ENCODE measurements at regions of chr2 and their contacts with region 1.

Region 1: DNA sequence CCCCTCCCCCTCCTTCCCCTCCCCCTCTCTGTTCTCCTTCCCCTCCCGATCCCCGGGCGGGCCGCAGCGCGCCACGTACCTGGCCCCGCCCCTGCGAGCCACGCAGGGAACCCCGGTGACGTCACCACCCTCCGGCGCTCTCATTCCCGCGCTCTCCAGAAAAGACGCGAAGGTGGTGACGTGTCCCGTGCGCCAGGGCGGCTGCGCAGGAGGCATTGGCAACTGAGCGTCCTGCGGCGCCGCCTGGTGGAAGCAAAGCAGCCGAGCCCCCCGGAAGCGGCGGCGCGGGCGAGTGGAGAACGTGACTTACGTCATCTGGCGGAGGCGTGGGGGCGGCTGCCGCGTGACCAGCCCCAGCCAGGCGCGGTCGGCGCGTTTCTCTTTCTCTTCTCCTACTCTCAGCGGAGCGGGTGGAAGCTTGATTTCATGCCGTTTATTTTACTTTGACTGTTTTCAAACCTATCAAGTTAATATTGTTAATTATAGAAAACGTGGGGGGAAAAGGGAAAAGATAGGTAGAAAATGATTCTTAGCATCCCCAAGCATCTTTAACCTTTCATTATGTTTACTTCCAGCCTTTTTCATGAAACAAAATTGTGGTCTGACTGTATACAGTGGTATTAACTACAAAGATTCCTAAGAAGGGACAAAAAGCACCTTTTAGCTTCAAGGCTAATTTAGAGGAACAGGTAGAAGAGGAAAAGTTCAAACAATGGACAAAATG is 48.1 kb downstream of the C2orf42 start:
- DNase-seq: peak; percentile 100
- ATAC-seq: peak; percentile 72
- H3K4me3 Mint-ChIP-seq: peak overlapping the region; percentile 82
- H3K27ac Mint-ChIP-seq: peak overlapping the region; percentile 99
- H3K4me1 Mint-ChIP-seq: peaks cover 62% of the 10 kb centered on the region
- H3K27me3 Mint-ChIP-seq: no peaks in the 10 kb centered on the region

Region 2: GRCh38 chr2:70043252-70043875 is 99.4 kb before region 1 on chr2:
- CTCF ChIA-PET with region 1: interaction called, 13 read pairs
- DNase-seq: peak; percentile 91
- ATAC-seq: peak; percentile 83
- H3K4me3 Mint-ChIP-seq: peak overlapping the region; percentile 55
- H3K27ac Mint-ChIP-seq: peak overlapping the region; percentile 98
- H3K4me1 Mint-ChIP-seq: peaks cover 67% of the 10 kb centered on the region
- H3K27me3 Mint-ChIP-seq: no peaks in the 10 kb centered on the region

Region 3: DNA sequence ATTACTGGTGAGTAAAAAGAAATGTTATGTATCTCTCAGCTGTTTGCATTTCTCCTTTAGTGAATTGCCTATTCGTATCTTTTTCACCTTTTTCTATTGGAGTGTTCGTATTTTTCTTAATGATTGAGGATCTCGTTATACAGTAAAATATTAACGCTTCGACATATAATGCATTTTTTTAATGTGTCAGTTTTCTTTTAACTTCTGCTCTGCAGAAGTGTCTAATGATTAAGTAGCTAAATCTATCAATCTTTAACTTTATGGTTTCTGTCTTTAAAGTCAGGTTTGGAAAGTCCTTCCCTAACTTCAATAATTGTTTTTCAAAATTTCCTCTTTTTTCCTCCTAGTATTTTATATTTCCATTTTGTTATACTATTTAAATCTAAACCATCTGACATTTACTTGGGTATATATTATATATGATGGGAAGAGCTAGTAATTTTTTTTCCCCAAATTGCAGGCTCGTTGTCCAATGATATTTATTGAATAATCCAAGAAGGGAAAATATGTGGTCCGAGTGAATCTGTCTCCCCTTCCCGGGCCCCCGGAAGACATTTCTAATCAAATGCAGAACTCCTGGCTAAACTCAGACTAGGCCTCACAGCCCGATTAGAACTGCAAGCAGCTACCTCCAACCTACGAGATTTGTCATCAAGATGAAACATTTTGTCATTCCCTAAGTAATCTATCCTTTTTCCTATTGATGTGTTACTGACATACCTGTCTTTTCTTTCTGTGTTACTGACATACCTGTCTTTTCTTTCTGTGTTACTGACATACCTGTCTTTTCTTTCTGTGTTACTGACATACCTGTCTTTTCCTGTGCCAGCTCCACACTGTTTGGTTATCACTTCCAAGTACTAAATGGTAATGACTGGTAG is 38.3 kb before region 1 on chr2:
- CTCF ChIA-PET with region 1: interaction called, 23 read pairs
- DNase-seq: peak; percentile 78
- ATAC-seq: no peak
- H3K4me3 Mint-ChIP-seq: peak overlapping the region; percentile 75
- H3K27ac Mint-ChIP-seq: peak overlapping the region; percentile 95
- H3K4me1 Mint-ChIP-seq: peaks cover 53% of the 10 kb centered on the region
- H3K27me3 Mint-ChIP-seq: no peaks in the 10 kb centered on the region

Region 4: GRCh38 chr2:70124983-70125480 is 17.7 kb before region 1 on chr2:
- CTCF ChIA-PET with region 1: interaction called, 66 read pairs
- DNase-seq: peak; percentile 70
- ATAC-seq: peak; percentile 69
- H3K4me3 Mint-ChIP-seq: peak overlapping the region; percentile 78
- H3K27ac Mint-ChIP-seq: peak overlapping the region; percentile 98
- H3K4me1 Mint-ChIP-seq: peaks cover 70% of the 10 kb centered on the region
- H3K27me3 Mint-ChIP-seq: no peaks in the 10 kb centered on the region

Region 5: GRCh38 chr2:70570041-70570663 is 427.4 kb after region 1 on chr2:
- CTCF ChIA-PET with region 1: no interaction called
- DNase-seq: no peak
- ATAC-seq: no peak
- H3K4me3 Mint-ChIP-seq: no peak overlapping the region
- H3K27ac Mint-ChIP-seq: no peak overlapping the region
- H3K4me1 Mint-ChIP-seq: peaks cover 6% of the 10 kb centered on the region
- H3K27me3 Mint-ChIP-seq: peaks cover 35% of the 10 kb centered on the region

Measured in activated CD8-positive, alpha-beta memory T cell treated with anti-CD3 and anti-CD28 coated beads, Interleukin-2, amount 10 ng/mL, durations not matched to agents 7 days and 5 days (primary cell).